Right ventricle myocardium inferior (tissue), 1 donor: ENCODE measurements at regions of chr15 and their contacts with region 1.

Region 1: DNA sequence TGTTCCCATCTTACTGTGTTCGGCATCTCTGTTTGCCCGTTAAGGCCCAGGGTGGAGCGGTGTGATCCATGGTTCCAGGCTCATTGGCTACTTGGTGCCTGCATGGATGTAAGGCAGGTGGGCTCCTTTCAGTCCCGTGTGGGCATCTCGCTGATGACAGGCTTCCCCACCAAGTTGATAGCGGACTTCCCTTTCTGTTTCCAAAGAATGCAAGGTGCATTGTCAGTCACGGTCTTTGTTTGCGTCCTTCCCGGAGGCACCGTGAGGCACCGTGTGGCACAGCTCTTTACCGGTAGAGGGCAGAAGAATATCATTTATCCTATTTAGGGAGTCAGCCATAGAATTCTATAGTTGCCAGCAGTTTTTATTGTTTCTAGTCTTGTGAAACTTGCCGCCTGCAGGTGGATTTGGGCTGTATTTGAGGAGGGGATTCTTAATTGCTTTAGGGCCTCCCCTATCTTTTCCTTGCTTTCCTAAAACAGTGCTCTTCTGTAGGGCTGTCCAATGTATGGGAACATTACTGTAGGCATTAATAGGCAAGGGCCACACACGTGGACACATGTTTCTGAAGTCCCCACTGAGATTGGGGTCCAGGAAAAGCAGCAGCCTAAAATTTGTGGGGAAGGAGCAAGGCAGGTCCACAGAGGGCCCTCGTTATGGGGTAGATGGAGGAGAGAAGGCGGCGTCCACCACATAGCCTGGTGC is 244.1 kb downstream of the SLCO3A1 start:
- DNase-seq: no peak
- ATAC-seq: peak; percentile 72

Region 2: GRCh38 chr15:92205255-92205739 is 107.7 kb after region 1 on chr15:
- intact Hi-C with region 1: loop called (anchors 5 kb)
- DNase-seq: no peak
- ATAC-seq: peak; percentile 79

Region 3: DNA sequence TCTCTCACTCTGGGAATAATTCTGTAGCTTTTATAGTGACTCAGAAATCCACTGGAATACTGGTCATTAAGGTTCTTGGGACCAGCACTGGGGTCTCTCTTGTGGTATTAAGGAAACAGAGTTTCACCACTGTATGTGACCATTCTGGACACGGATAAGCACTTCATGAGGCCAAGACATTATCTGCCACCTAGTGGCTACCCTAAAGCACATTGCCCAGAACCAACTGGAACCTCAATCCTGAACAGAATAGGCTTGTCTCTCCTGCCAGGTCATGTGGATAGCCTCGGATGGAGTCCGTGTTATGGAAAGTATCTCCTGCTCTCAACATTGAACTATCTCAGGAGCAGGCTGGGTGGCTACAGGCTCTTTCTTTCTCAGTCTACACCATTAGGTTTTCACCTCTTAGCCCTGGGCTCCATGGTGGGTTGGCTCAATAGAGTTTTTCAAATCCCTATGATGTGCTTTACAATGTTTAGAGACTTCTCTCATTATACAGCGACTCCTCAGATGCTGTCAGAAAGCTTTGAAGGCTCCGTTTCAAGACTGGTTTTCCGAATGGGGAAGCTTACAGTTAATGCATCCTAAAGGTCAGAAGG is 128.5 kb after region 1 on chr15:
- intact Hi-C with region 1: loop called (anchors 2 kb)
- DNase-seq: no peak
- ATAC-seq: peak; percentile 81

Region 4: GRCh38 chr15:92383519-92384326 is 286.1 kb after region 1 on chr15:
- intact Hi-C with region 1: loop called (anchors 10 kb)
- DNase-seq: no peak
- ATAC-seq: no peak